ENCODE measurements at regions of chr9 and their contacts with region 1.

Region 1: DNA sequence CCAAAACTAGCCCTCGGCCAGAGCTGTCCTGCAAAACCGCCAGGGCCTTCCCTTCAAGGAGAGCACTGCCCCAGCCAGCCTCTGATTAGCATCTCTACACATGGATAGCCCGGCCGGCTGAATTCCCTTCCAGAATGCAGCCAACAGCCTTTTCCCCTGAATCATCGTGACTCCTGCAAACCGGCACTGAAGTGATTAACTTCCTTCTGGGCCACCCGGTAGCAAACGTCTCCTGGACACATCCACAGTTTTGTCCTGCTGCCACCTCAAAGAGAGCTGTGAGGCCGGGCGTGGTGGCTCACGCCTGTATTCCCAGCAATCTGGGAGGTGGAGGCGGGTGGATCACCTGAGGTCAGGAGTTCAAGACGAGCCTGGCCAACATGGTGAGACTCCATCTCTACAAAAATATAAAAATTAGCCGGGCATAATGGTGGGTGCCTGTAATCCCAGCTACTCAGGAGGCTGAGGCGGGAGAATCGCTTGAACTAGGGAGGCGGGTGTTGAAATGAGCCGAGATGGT is 21.1 kb upstream of the EEIG1 start:
- DNase-seq: no peak
- ATAC-seq: no peak
- H3K4me3 ChIP-seq: no peak overlapping the region
- H3K27ac ChIP-seq: peak overlapping the region in 4 of 10 donors; percentile 0 to 72 (median 42)
- H3K4me1 ChIP-seq: peaks cover 2 to 34% (median 21%) of the 10 kb centered on the region in 9 donors
- H3K27me3 ChIP-seq: no peaks in the 10 kb centered on the region
- CTCF ChIP-seq: no peak

Region 2: GRCh38 chr9:127955294-127956035 is 46.4 kb before region 1 on chr9:
- intact Hi-C with region 1: loop called in 1 of 10 experiments (anchors 5 kb)
- DNase-seq: peak; percentile 38 to 68
- ATAC-seq: peak; percentile 58 to 89 (median 84)
- H3K4me3 ChIP-seq: no peak overlapping the region
- H3K27ac ChIP-seq: peak overlapping the region in 9 of 10 donors; percentile 26 to 78 (median 66)
- H3K4me1 ChIP-seq: peaks cover 8 to 65% (median 40%) of the 10 kb centered on the region in 9 donors
- H3K27me3 ChIP-seq: no peaks in the 10 kb centered on the region
- CTCF ChIP-seq: peak in 8 of 9 donors; percentile 20 to 43 (median 37)

Region 3: DNA sequence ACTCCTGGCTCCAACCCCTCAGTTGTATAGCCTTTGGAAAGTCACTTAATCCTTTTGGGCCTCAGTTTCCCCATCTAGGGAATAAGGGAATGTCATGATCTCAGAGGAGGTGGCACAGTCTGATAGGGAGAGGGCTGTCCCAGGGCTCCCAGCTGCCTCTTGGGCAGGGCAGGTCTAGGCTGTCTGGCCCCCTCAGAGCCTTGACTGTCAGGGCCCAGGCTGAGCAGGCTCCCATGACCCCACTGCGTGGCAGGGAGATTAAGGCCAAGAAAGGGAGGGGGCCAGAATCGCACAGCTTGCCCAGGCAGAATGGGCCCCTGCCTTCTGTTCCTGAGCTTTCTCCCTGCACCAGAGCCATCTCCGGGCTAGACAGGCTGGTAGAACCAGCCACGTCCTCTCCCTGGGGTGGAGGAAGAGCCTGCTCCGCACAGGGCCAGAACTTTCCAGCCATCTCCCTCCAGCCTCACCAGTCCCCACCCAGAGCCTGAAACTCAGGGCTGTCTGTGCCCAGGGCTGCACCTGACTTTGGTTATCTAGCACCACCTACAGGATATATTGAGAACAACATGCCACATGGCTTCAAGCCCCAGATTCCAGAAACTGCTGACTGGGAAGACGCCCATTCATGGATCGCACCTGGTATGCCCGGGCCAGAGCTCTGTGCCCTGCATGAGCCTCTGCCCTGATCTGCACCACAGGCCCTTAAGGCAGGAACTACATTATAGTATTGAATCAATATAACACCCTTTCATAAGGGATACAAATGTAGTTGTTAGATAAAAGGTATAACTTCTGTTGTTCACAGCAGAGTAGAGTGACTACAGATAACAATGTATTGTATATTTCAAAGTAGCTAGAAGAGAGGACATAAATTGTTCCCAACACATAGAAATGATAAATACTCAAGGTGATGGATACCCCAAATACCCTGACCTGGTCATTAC is 33.3 kb after region 1 on chr9:
- intact Hi-C with region 1: loop called in 1 of 10 experiments (anchors 5 kb)
- DNase-seq: peak; percentile 44 to 71
- ATAC-seq: peak; percentile 93 to 98 (median 94)
- H3K4me3 ChIP-seq: no peak overlapping the region
- H3K27ac ChIP-seq: peak overlapping the region in 2 of 10 donors; percentile 21 to 25
- H3K4me1 ChIP-seq: peaks cover 0 to 10% (median 4%) of the 10 kb centered on the region in 9 donors
- H3K27me3 ChIP-seq: no peaks in the 10 kb centered on the region
- CTCF ChIP-seq: peak; percentile 69 to 90 (median 87)

Measured in heart right ventricle (tissue), 16 donors.